ENCODE measurements at regions of chr11 and their contacts with region 1.

Region 1: GRCh38 chr11:102495161-102496042 is 35.1 kb downstream of the MMP7 start:
- DNase-seq: peak; percentile 95
- ATAC-seq: peak; percentile 41
- H3K4me3 ChIP-seq: no peak overlapping the region
- H3K27ac ChIP-seq: peak overlapping the region; percentile 53; the same call in 1 of the 2 replicates
- H3K4me1 ChIP-seq: peaks cover 21% of the 10 kb centered on the region
- H3K27me3 ChIP-seq: no peaks in the 10 kb centered on the region
- CTCF ChIP-seq: peak; percentile 95

Region 2: GRCh38 chr11:101848262-101848661 is 647.1 kb before region 1 on chr11:
- CTCF ChIA-PET with region 1: no interaction called
- POLR2A ChIA-PET with region 1: no interaction called
- intact Hi-C with region 1: loop called (anchors 5 kb)
- DNase-seq: peak; percentile 77
- ATAC-seq: no peak
- H3K4me3 ChIP-seq: no peak overlapping the region
- H3K27ac ChIP-seq: no peak overlapping the region
- H3K4me1 ChIP-seq: peaks cover 4% of the 10 kb centered on the region; the same call in 1 of the 2 replicates
- H3K27me3 ChIP-seq: no peaks in the 10 kb centered on the region
- CTCF ChIP-seq: peak; percentile 84

Region 3: DNA sequence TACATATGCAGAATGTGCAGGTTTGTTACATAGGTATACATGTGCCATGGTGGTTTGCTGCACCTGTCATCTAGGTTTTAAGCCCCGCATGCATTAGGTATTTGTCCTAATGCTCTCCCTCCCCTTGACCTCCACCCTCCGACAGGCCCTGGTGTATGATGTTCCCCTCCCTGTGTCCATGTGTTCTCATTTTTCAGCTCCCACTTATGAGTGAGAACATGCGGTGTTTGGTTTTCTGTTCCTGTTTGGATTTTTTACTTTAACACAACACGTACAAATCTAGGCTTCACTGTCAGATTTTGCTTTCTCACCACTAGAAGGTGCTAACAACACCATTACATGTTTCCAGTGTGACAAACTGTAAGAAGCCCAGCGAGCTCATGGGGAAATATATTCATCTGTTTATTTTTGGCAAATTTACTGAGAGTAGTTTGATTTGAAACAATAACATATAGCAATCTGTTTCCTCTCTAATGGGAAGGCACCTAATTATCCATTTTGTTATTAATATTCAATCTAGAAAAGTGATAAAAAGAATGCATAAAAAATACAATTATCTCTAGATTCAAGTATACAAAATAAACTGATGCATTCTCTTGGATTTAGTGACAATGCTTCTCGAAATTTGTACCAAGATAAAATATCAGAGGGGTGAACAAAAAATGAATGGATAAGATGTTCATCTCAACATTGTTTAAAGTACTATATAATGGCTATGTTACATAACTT is 201.4 kb before region 1 on chr11:
- CTCF ChIA-PET with region 1: no interaction called
- POLR2A ChIA-PET with region 1: no interaction called
- intact Hi-C with region 1: loop called (anchors 1 kb)
- DNase-seq: peak; percentile 80
- ATAC-seq: peak; percentile 49
- H3K4me3 ChIP-seq: no peak overlapping the region
- H3K27ac ChIP-seq: no peak overlapping the region
- H3K4me1 ChIP-seq: peaks cover 25% of the 10 kb centered on the region
- H3K27me3 ChIP-seq: no peaks in the 10 kb centered on the region
- CTCF ChIP-seq: peak; percentile 82

Region 4: DNA sequence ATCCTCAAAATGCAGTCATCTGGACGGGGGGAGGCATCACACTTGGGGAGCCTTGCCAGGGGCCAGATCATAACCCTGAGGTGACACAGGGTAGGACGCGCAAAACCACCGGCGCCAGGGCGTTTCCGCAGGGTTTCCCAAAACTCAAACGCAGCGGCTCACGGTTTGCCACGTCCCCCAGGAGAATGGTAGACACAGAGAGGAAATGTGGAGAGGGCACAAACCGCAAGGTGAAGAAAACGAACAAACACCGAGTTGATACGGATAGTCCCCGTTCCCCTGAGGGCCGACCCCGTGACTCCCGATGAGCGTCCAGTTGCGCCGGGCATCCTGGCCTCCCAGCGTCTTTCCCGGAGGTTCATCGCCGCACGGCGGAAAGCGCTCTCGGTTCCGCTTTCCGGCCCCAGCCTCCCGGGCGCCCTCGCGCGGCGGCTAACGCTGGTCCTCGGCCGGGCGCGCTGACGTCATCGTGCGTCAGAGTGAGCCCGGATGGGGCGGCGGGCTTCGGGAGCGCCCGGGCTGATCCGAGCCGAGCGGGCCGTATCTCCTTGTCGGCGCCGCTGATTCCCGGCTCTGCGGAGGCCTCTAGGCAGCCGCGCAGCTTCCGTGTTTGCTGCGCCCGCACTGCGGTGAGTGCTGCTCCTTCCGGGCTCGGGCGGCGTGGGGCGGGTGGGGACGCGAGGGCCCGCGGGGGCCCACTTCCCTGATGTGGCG is 148.5 kb before region 1 on chr11 and contains the start of gene BIRC2:
- CTCF ChIA-PET with region 1: no interaction called
- POLR2A ChIA-PET with region 1: no interaction called
- intact Hi-C with region 1: loop called (anchors 2 kb)
- DNase-seq: peak; percentile 99
- ATAC-seq: peak; percentile 78
- H3K4me3 ChIP-seq: peak within 1 kb of the TSS; percentile 88
- H3K27ac ChIP-seq: peak within 1 kb of the TSS; percentile 90
- H3K4me1 ChIP-seq: peaks cover 34% of the 10 kb centered on the region
- H3K27me3 ChIP-seq: no peaks in the 10 kb centered on the region
- CTCF ChIP-seq: peak; percentile 77
- total RNA-seq, gene BIRC2: 36.1 and 42.6 TPM in 2 replicates

Region 5: GRCh38 chr11:102390667-102391465 is 104.5 kb before region 1 on chr11:
- CTCF ChIA-PET with region 1: no interaction called
- POLR2A ChIA-PET with region 1: no interaction called
- intact Hi-C with region 1: loop called (anchors 1 kb)
- DNase-seq: peak; percentile 87
- ATAC-seq: peak; percentile 87
- H3K4me3 ChIP-seq: no peak overlapping the region
- H3K27ac ChIP-seq: no peak overlapping the region
- H3K4me1 ChIP-seq: no peaks in the 10 kb centered on the region
- H3K27me3 ChIP-seq: no peaks in the 10 kb centered on the region
- CTCF ChIP-seq: peak; percentile 97

Region 6: DNA sequence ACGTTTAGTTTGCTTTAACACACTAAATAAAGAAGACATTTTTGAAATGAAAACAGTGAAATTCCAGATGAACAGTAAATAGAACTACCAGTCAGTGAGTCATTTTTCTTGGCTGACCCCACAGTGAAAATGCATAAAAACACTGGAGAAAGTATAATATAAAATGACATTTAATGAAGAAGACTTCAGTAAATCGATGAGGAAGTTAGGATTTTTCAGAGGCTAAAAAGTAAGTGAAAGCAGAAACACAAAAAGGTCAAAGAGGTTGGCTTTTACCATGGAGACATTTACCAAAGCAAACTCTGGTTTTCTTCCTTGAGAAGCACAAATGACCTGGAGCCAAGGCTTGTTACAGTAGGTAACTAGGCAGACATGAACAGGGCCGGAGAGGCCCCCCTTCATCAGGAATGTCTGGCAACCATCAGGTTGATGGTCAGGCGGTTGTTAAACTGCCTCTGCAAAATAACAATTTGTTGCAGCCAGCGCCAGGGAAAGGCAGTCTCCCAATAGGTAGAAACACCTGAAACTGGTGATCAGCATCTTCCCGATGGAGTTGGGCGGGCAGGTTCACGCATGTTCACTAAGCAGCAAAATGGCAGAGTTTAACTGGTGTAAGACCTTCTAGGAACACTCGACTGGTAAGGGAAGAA is 26.1 kb before region 1 on chr11:
- CTCF ChIA-PET with region 1: no interaction called
- POLR2A ChIA-PET with region 1: no interaction called
- intact Hi-C with region 1: loop called (anchors 1 kb)
- DNase-seq: peak; percentile 78
- ATAC-seq: peak; percentile 76
- H3K4me3 ChIP-seq: peak overlapping the region; percentile 8; the same call in 1 of the 2 replicates
- H3K27ac ChIP-seq: peak overlapping the region; percentile 72
- H3K4me1 ChIP-seq: peaks cover 46% of the 10 kb centered on the region
- H3K27me3 ChIP-seq: no peaks in the 10 kb centered on the region
- CTCF ChIP-seq: no peak

Region 7: GRCh38 chr11:102510439-102511135 is 15.2 kb after region 1 on chr11:
- CTCF ChIA-PET with region 1: no interaction called
- POLR2A ChIA-PET with region 1: no interaction called
- intact Hi-C with region 1: no loop called
- DNase-seq: no peak
- ATAC-seq: no peak
- H3K4me3 ChIP-seq: no peak overlapping the region
- H3K27ac ChIP-seq: no peak overlapping the region
- H3K4me1 ChIP-seq: no peaks in the 10 kb centered on the region
- H3K27me3 ChIP-seq: no peaks in the 10 kb centered on the region
- CTCF ChIP-seq: no peak

Region 8: DNA sequence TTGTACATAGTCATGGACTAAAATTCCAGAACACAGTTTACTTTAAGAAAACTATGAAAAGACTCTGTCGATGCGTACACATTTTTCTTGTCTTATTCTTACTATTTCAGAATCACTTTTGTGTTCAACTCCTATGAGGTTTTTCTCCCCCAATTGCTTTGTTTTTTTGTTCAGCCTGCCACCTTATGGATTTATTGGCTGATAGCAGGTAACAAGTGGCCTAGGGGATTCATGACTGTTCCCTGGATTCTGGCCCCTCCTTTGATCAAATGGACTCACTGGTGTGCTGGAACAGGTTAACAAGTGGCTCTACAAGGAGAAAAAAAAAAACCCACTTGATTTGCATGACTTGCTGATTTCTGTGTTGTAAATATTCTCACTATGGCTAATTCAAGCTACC is 119.1 kb after region 1 on chr11:
- CTCF ChIA-PET with region 1: interaction called, 5 read pairs
- POLR2A ChIA-PET with region 1: no interaction called
- intact Hi-C with region 1: loop called (anchors 1 kb)
- DNase-seq: peak; percentile 35
- ATAC-seq: no peak
- H3K4me3 ChIP-seq: no peak overlapping the region
- H3K27ac ChIP-seq: no peak overlapping the region
- H3K4me1 ChIP-seq: peaks cover 6% of the 10 kb centered on the region
- H3K27me3 ChIP-seq: no peaks in the 10 kb centered on the region
- CTCF ChIP-seq: peak; percentile 53; the same call in 1 of the 2 replicates

Region 9: GRCh38 chr11:102676084-102676483 is 180.7 kb after region 1 on chr11:
- CTCF ChIA-PET with region 1: no interaction called
- POLR2A ChIA-PET with region 1: no interaction called
- intact Hi-C with region 1: no loop called
- DNase-seq: no peak
- ATAC-seq: no peak
- H3K4me3 ChIP-seq: no peak overlapping the region
- H3K27ac ChIP-seq: no peak overlapping the region
- H3K4me1 ChIP-seq: no peaks in the 10 kb centered on the region
- H3K27me3 ChIP-seq: no peaks in the 10 kb centered on the region
- CTCF ChIP-seq: no peak

Measured in PC-3 (cell line).